Ascending aorta (tissue), 2 donors: ENCODE measurements at regions of chr11 and their contacts with region 1.

Region 1: DNA sequence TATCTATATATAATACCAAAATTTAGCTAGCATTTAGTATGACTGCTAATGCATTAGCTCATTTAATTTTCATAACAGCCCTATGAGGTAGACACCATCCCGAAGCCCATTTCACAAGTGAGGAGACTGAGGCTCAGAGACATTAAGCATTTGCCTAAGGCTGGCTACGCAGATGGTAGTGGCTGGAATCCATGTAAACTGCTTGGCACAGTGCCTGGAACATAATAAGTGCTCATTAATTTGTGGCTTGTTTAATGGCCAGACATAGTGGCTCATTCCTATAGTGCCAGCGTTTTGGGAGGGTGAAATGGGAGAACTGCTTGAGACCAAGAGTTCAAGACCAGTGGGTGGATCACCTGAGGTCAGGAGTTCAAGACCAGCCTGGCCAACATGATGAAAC is 17.8 kb upstream of the TP53I11 start:
- DNase-seq: no peak
- H3K4me3 ChIP-seq: no peak overlapping the region
- H3K27ac ChIP-seq: no peak overlapping the region
- H3K4me1 ChIP-seq: peaks cover 0 to 6% of the 10 kb centered on the region in 2 donors
- H3K27me3 ChIP-seq: no peaks in the 10 kb centered on the region
- CTCF ChIP-seq: no peak

Region 2: DNA sequence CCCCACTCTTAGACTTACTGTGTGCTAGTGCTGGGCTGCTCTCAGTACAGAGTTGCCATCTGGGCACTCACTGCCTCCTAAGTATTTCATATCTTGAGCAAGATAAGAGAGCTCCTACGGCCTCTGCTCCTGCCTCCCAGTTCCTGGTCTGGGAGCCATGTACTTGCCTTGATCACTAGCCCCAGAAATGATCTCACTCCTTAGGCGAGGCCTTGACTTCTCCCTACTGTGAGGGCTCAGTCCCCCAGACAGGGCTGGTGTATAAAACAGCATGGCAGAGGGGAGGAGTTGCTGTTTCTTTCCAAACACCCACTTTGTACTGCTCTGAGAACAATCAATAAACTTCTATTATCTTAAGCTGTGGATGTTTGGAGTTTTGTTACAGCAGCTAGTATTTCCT is 29.5 kb after region 1 on chr11:
- intact Hi-C with region 1: loop called (anchors 2 kb)
- DNase-seq: no peak
- H3K4me3 ChIP-seq: no peak overlapping the region
- H3K27ac ChIP-seq: no peak overlapping the region
- H3K4me1 ChIP-seq: no peaks in the 10 kb centered on the region
- H3K27me3 ChIP-seq: no peaks in the 10 kb centered on the region
- CTCF ChIP-seq: no peak

Region 3: GRCh38 chr11:45267052-45267451 is 298.5 kb after region 1 on chr11:
- intact Hi-C with region 1: no loop called
- DNase-seq: no peak
- H3K4me3 ChIP-seq: no peak overlapping the region
- H3K27ac ChIP-seq: no peak overlapping the region
- H3K4me1 ChIP-seq: no peaks in the 10 kb centered on the region
- H3K27me3 ChIP-seq: no peaks in the 10 kb centered on the region
- CTCF ChIP-seq: no peak